H1 (cell line): ENCODE measurements at regions of chr3 and their contacts with region 1.

Region 1: DNA sequence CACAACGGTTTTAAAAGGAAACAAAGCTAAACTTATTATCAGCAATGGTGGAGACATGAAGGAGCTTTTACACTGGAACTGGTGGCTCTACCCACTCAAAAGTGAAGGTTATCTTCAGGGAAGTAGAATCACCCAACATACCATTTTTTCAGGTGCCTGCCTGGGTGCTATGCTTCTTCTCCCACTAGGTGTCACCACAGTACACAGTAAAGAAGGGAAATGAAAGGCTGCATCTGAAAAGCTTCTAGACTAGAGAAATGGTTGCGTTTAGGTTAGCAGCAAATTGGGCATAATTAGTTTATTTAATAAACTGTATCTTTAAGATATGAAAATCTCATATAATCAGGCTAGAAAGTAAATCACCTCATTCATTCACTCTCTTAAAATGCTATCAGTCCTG is 47.0 kb upstream of the SELENOK start:
- DNase-seq: peak in 1 of 2 experiments; percentile 69
- H3K4me3 ChIP-seq: no peak overlapping the region
- H3K27ac ChIP-seq: no peak overlapping the region
- H3K4me1 ChIP-seq: no peaks in the 10 kb centered on the region
- H3K27me3 ChIP-seq: no peaks in the 10 kb centered on the region
- CTCF ChIP-seq: peak in 2 of 3 experiments; percentile 67 to 77; a peak in 3 of 4 replicates
- EP300 ChIP-seq: no peak
- POLR2A ChIP-seq: no peak
- RAD21 ChIP-seq: peak; percentile 86 to 90

Region 2: GRCh38 chr3:53913401-53913800 is 25.2 kb before region 1 on chr3:
- CTCF ChIA-PET with region 1: no interaction called
- POLR2A ChIA-PET with region 1: no interaction called
- DNase-seq: no peak
- H3K4me3 ChIP-seq: no peak overlapping the region
- H3K27ac ChIP-seq: no peak overlapping the region
- H3K4me1 ChIP-seq: no peaks in the 10 kb centered on the region
- H3K27me3 ChIP-seq: no peaks in the 10 kb centered on the region
- CTCF ChIP-seq: no peak
- EP300 ChIP-seq: no peak
- POLR2A ChIP-seq: no peak
- RAD21 ChIP-seq: no peak

Region 3: GRCh38 chr3:54104084-54104483 is 165.4 kb after region 1 on chr3:
- CTCF ChIA-PET with region 1: interaction called, 12 read pairs
- POLR2A ChIA-PET with region 1: no interaction called
- DNase-seq: no peak
- H3K4me3 ChIP-seq: no peak overlapping the region
- H3K27ac ChIP-seq: no peak overlapping the region
- H3K4me1 ChIP-seq: no peaks in the 10 kb centered on the region
- H3K27me3 ChIP-seq: no peaks in the 10 kb centered on the region
- CTCF ChIP-seq: no peak
- EP300 ChIP-seq: no peak
- POLR2A ChIP-seq: no peak
- RAD21 ChIP-seq: no peak; a peak in 1 of 4 replicates

Region 4: GRCh38 chr3:54134713-54135112 is 196.1 kb after region 1 on chr3:
- CTCF ChIA-PET with region 1: interaction called, 33 read pairs
- POLR2A ChIA-PET with region 1: no interaction called
- DNase-seq: no peak
- H3K4me3 ChIP-seq: no peak overlapping the region
- H3K27ac ChIP-seq: no peak overlapping the region
- H3K4me1 ChIP-seq: peaks cover 0 to 7% (median 3%) of the 10 kb centered on the region in 4 experiments; a peak in 2 of 7 replicates
- H3K27me3 ChIP-seq: no peaks in the 10 kb centered on the region
- CTCF ChIP-seq: peak in 1 of 3 experiments; percentile 0; a peak in 1 of 4 replicates
- EP300 ChIP-seq: no peak
- POLR2A ChIP-seq: no peak
- RAD21 ChIP-seq: no peak

Region 5: DNA sequence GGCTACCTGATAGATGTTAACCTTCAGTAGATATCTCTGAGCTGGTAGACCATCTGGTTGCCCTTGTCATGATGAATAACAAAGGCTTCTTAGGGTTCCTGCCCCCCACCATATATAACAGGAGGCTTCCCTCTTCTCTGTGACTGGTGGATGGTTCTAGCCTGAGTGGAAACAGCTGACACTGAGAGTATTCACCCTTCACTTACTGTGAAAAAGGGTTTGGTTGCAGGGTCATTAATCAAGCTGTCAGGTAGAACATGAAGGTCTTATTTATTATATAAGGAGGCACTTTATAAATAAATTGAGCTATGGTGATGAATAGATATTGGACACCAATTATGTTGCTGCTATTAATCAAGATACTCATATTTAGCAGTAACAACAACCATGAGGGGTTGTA is 242.3 kb after region 1 on chr3:
- CTCF ChIA-PET with region 1: no interaction called
- POLR2A ChIA-PET with region 1: no interaction called
- DNase-seq: no peak
- H3K4me3 ChIP-seq: no peak overlapping the region
- H3K27ac ChIP-seq: no peak overlapping the region
- H3K4me1 ChIP-seq: peaks cover 0 to 5% (median 3%) of the 10 kb centered on the region in 4 experiments; a peak in 3 of 7 replicates
- H3K27me3 ChIP-seq: no peaks in the 10 kb centered on the region
- CTCF ChIP-seq: no peak
- EP300 ChIP-seq: no peak
- POLR2A ChIP-seq: no peak
- RAD21 ChIP-seq: no peak

Region 6: GRCh38 chr3:54251705-54252104 is 313.1 kb after region 1 on chr3:
- CTCF ChIA-PET with region 1: no interaction called
- POLR2A ChIA-PET with region 1: no interaction called
- DNase-seq: no peak
- H3K4me3 ChIP-seq: no peak overlapping the region
- H3K27ac ChIP-seq: no peak overlapping the region
- H3K4me1 ChIP-seq: no peaks in the 10 kb centered on the region
- H3K27me3 ChIP-seq: no peaks in the 10 kb centered on the region
- CTCF ChIP-seq: no peak
- EP300 ChIP-seq: no peak
- POLR2A ChIP-seq: no peak
- RAD21 ChIP-seq: no peak

Region 7: DNA sequence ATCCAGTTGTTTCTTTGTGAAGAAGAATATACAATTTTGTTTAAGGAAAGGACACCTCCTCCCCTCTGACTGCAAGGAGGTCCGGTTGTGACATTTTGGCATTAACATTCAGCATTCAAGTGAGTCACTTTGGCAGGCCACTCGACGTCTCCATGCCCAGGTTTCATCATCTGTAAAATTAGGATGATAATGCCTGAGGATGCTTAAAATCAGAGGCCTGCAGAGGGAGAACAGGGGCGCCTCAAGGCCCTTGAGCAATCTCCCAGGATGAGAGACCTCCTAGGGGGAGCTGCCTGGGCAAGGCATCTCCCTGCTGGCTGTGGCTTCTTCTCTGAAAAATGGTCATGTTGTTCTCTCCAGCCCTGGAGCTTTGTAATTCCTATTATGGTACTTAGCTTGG is 419.7 kb after region 1 on chr3:
- CTCF ChIA-PET with region 1: interaction called, 14 read pairs
- POLR2A ChIA-PET with region 1: no interaction called
- DNase-seq: no peak
- H3K4me3 ChIP-seq: no peak overlapping the region
- H3K27ac ChIP-seq: no peak overlapping the region
- H3K4me1 ChIP-seq: peaks cover 0 to 2% (median 0%) of the 10 kb centered on the region in 4 experiments; a peak in 2 of 7 replicates
- H3K27me3 ChIP-seq: no peaks in the 10 kb centered on the region
- CTCF ChIP-seq: no peak
- EP300 ChIP-seq: no peak
- POLR2A ChIP-seq: no peak
- RAD21 ChIP-seq: no peak

Region 8: GRCh38 chr3:54433846-54434245 is 495.2 kb after region 1 on chr3:
- CTCF ChIA-PET with region 1: interaction called, 16 read pairs
- POLR2A ChIA-PET with region 1: no interaction called
- DNase-seq: peak; percentile 59 to 69
- H3K4me3 ChIP-seq: no peak overlapping the region
- H3K27ac ChIP-seq: no peak overlapping the region
- H3K4me1 ChIP-seq: 0 out of 7 replicates have a peak, but pooled peaks cover 0 to 1% (median 0%) of the 10 kb centered on the region in 4 experiments
- H3K27me3 ChIP-seq: no peaks in the 10 kb centered on the region
- CTCF ChIP-seq: peak; percentile 87 to 99 (median 98)
- EP300 ChIP-seq: no peak
- POLR2A ChIP-seq: no peak
- RAD21 ChIP-seq: peak; percentile 79 to 88